ENCODE measurements at regions of chr1 and their contacts with region 1.

Region 1: GRCh38 chr1:212455803-212456528 is 23.2 kb downstream of the NENF start:
- DNase-seq: peak; percentile 90 to 91
- H3K4me3 ChIP-seq: no peak overlapping the region
- H3K27ac ChIP-seq: peak overlapping the region; percentile 57 to 63
- H3K4me1 ChIP-seq: peaks cover 0 to 5% of the 10 kb centered on the region in 2 donors
- H3K27me3 ChIP-seq: no peaks in the 10 kb centered on the region
- CTCF ChIP-seq: peak; percentile 93 to 100 (median 96)
- POLR2A ChIP-seq: no peak

Region 2: GRCh38 chr1:212070720-212071302 is 385.2 kb before region 1 on chr1:
- intact Hi-C with region 1: loop called (anchors 5 kb)
- DNase-seq: no peak
- H3K4me3 ChIP-seq: no peak overlapping the region
- H3K27ac ChIP-seq: no peak overlapping the region
- H3K4me1 ChIP-seq: no peaks in the 10 kb centered on the region
- H3K27me3 ChIP-seq: no peaks in the 10 kb centered on the region
- CTCF ChIP-seq: peak; percentile 63 to 85 (median 82)
- POLR2A ChIP-seq: no peak